Posterior cingulate gyrus (tissue), 11 donors: ENCODE measurements at regions of chr3 and their contacts with region 1.

Region 1: GRCh38 chr3:181956122-181956521 is 244.4 kb downstream of the SOX2 start:
- DNase-seq: no peak

Region 2: GRCh38 chr3:181987736-181988135 is 31.6 kb after region 1 on chr3:
- intact Hi-C with region 1: loop called (anchors 1 kb)
- DNase-seq: no peak

Region 3: GRCh38 chr3:183369117-183369516 is 1413.0 kb after region 1 on chr3:
- intact Hi-C with region 1: no loop called
- DNase-seq: no peak